ENCODE measurements at regions of chr13 and their contacts with region 1.

Region 1: GRCh38 chr13:95834134-95834765 is 157.3 kb downstream of the DNAJC3 start:
- DNase-seq: peak; percentile 25 to 81 (median 53)
- ATAC-seq: peak in 3 of 4 experiments; percentile 37 to 64 (median 57)
- H3K4me3 ChIP-seq: no peak overlapping the region
- H3K4me3 Mint-ChIP-seq: no peak overlapping the region
- H3K27ac ChIP-seq: no peak overlapping the region
- H3K27ac Mint-ChIP-seq: no peak overlapping the region
- H3K4me1 ChIP-seq: no peaks in the 10 kb centered on the region
- H3K4me1 Mint-ChIP-seq: no peaks in the 10 kb centered on the region
- H3K27me3 ChIP-seq: no peaks in the 10 kb centered on the region
- H3K27me3 Mint-ChIP-seq: peaks cover 18 to 23% of the 10 kb centered on the region in 2 donors

Region 2: GRCh38 chr13:95536632-95537241 is 297.5 kb before region 1 on chr13:
- CTCF ChIA-PET with region 1: interaction called, 21 to 25 read pairs
- POLR2A ChIA-PET with region 1: no interaction called
- DNase-seq: peak in 1 of 35 experiments; percentile 16
- ATAC-seq: no peak
- H3K4me3 ChIP-seq: no peak overlapping the region
- H3K4me3 Mint-ChIP-seq: no peak overlapping the region
- H3K27ac ChIP-seq: no peak overlapping the region
- H3K27ac Mint-ChIP-seq: no peak overlapping the region
- H3K4me1 ChIP-seq: no peaks in the 10 kb centered on the region
- H3K4me1 Mint-ChIP-seq: no peaks in the 10 kb centered on the region
- H3K27me3 ChIP-seq: peaks cover 0 to 3% of the 10 kb centered on the region in 2 experiments
- H3K27me3 Mint-ChIP-seq: peaks cover 24 to 37% of the 10 kb centered on the region in 2 donors

Region 3: DNA sequence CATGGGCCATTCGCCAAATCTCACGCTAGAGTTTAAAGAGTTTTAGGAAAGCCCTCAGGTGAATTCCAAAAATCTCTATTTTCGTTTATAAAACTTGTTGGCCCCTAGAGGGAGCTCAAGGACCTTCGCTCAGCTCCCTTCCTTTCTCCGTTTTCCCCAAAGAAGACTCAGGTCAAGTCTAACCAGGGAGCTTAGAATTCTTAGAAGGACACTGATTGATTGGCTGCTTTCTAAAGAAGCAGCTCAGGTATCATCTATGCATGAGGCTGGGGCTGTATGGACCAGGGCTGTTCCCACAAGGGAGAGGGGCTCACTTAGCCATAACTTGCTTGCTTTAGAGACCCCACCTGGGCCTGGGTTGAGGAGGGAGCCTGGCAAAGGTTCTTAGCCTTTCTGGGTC is 210.2 kb before region 1 on chr13:
- CTCF ChIA-PET with region 1: interaction called, 69 to 77 read pairs
- POLR2A ChIA-PET with region 1: no interaction called
- DNase-seq: peak in 5 of 35 experiments; percentile 0 to 67 (median 5)
- ATAC-seq: no peak
- H3K4me3 ChIP-seq: no peak overlapping the region
- H3K4me3 Mint-ChIP-seq: no peak overlapping the region
- H3K27ac ChIP-seq: no peak overlapping the region
- H3K27ac Mint-ChIP-seq: no peak overlapping the region
- H3K4me1 ChIP-seq: no peaks in the 10 kb centered on the region
- H3K4me1 Mint-ChIP-seq: no peaks in the 10 kb centered on the region
- H3K27me3 ChIP-seq: peaks cover 0 to 7% of the 10 kb centered on the region in 2 experiments
- H3K27me3 Mint-ChIP-seq: peaks cover 4 to 12% of the 10 kb centered on the region in 2 donors

Region 4: DNA sequence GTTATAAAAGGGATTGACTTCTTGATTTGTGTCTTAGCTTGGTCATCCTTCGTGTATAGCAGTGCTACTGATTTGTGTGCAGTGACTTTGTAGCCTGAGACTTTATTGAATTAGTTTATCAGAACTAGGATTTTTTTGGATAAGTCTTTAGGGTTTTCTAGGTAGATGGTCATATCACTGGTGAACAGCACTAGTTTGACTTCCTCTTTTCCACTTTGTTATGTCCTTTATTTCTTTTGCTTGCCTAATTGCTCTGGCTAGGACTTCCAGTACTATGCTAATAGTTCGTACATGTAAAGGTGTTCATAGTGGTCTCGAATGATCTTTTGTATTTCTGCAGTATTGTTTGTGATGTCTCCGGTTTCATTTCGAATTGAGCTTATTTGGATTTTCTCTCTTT is 11.9 kb before region 1 on chr13:
- CTCF ChIA-PET with region 1: interaction called, 7 to 16 read pairs
- POLR2A ChIA-PET with region 1: interaction called in 1 of 2 experiments, 3 read pairs
- DNase-seq: no peak
- ATAC-seq: no peak
- H3K4me3 ChIP-seq: no peak overlapping the region
- H3K4me3 Mint-ChIP-seq: no peak overlapping the region
- H3K27ac ChIP-seq: no peak overlapping the region
- H3K27ac Mint-ChIP-seq: no peak overlapping the region
- H3K4me1 ChIP-seq: no peaks in the 10 kb centered on the region
- H3K4me1 Mint-ChIP-seq: no peaks in the 10 kb centered on the region
- H3K27me3 ChIP-seq: peaks cover 0 to 5% of the 10 kb centered on the region in 2 experiments
- H3K27me3 Mint-ChIP-seq: peaks cover 19 to 27% of the 10 kb centered on the region in 2 donors

Measured in T-cell (primary cell).